ENCODE measurements at regions of chr17 and their contacts with region 1.

Region 1: GRCh38 chr17:58417300-58418092 is at the start of gene RNF43:
- DNase-seq: peak; percentile 96
- ATAC-seq: peak; percentile 100
- H3K4me3 ChIP-seq: peak within 1 kb of the TSS in 1 of 5 experiments; percentile 20
- H3K4me3 Mint-ChIP-seq: peak within 1 kb of the TSS; percentile 8
- H3K27ac ChIP-seq: peak within 1 kb of the TSS; percentile 61 to 65
- H3K27ac Mint-ChIP-seq: peak within 1 kb of the TSS; percentile 51
- H3K4me1 ChIP-seq: peaks cover 14 to 16% of the 10 kb centered on the region in 2 donors
- H3K4me1 Mint-ChIP-seq: peaks cover 21% of the 10 kb centered on the region
- H3K27me3 ChIP-seq: no peaks in the 10 kb centered on the region
- H3K27me3 Mint-ChIP-seq: no peaks in the 10 kb centered on the region
- CTCF ChIP-seq: peak; percentile 77
- total RNA-seq, gene RNF43: 2.5 and 3.2 TPM in 2 replicates

Region 2: GRCh38 chr17:58329035-58329809 is 88.3 kb before region 1 on chr17:
- CTCF ChIA-PET with region 1: interaction called, 15 read pairs
- POLR2A ChIA-PET with region 1: interaction called, 15 read pairs
- intact Hi-C with region 1: loop called (anchors 1 kb)
- DNase-seq: peak; percentile 88
- ATAC-seq: peak; percentile 37
- H3K4me3 ChIP-seq: peak overlapping the region; percentile 81 to 100 (median 99)
- H3K4me3 Mint-ChIP-seq: peak overlapping the region; percentile 91
- H3K27ac ChIP-seq: peak overlapping the region; percentile 73 to 85
- H3K27ac Mint-ChIP-seq: peak overlapping the region; percentile 93
- H3K4me1 ChIP-seq: peaks cover 36 to 69% of the 10 kb centered on the region in 2 donors
- H3K4me1 Mint-ChIP-seq: peaks cover 61% of the 10 kb centered on the region
- H3K27me3 ChIP-seq: no peaks in the 10 kb centered on the region
- H3K27me3 Mint-ChIP-seq: no peaks in the 10 kb centered on the region
- CTCF ChIP-seq: peak; percentile 79

Region 3: GRCh38 chr17:58337600-58338453 is 79.7 kb before region 1 on chr17:
- CTCF ChIA-PET with region 1: interaction called, 9 read pairs
- POLR2A ChIA-PET with region 1: interaction called, 18 read pairs
- intact Hi-C with region 1: no loop called
- DNase-seq: peak; percentile 95
- ATAC-seq: peak; percentile 67
- H3K4me3 ChIP-seq: peak overlapping the region; percentile 75 to 100 (median 99)
- H3K4me3 Mint-ChIP-seq: peak overlapping the region; percentile 91
- H3K27ac ChIP-seq: peak overlapping the region; percentile 99 to 100
- H3K27ac Mint-ChIP-seq: peak overlapping the region; percentile 98
- H3K4me1 ChIP-seq: peaks cover 85 to 100% of the 10 kb centered on the region in 2 donors
- H3K4me1 Mint-ChIP-seq: peaks cover 88% of the 10 kb centered on the region
- H3K27me3 ChIP-seq: no peaks in the 10 kb centered on the region
- H3K27me3 Mint-ChIP-seq: no peaks in the 10 kb centered on the region
- CTCF ChIP-seq: peak; percentile 31

Region 4: DNA sequence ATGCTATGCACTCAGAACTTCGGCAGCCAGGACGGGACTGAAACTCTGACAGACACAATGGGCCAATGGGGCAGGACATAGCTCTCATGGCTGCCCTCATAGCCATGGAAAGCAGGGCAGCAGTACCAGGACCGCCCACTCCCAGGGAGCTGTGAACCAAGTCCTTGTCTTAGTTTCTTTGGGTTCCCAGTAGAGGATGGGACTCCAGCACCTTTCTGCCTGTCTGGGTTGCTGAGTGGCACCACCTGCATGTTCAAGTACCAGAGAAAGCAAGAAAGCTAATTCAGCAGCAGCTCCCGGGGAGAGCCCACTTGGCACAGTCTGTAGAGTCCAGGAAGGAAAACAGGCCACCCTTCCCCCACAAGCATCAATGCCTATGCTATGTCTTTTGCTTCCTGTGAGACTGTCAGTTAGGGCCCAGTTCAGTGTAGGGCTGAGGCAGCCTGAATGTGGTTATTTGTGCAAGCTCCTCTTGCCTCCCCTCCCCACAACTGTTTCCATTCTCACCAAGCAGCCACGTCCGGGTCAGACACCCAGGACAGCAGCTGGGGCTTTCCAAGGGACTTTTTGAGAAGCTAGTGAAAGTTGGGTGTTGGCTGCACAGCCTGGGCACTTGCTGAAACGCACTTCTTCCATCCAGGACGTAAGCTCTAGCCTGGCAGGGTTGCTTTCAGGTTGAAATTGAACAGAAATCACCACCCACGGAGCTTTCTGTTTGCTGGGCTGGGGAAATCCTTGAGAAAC is 73.3 kb before region 1 on chr17:
- CTCF ChIA-PET with region 1: interaction called, 33 read pairs
- POLR2A ChIA-PET with region 1: interaction called, 18 read pairs
- intact Hi-C with region 1: loop called (anchors 2 kb)
- DNase-seq: peak; percentile 95
- ATAC-seq: peak; percentile 85
- H3K4me3 ChIP-seq: peak overlapping the region; percentile 56 to 82 (median 62)
- H3K4me3 Mint-ChIP-seq: peak overlapping the region; percentile 88
- H3K27ac ChIP-seq: peak overlapping the region; percentile 98 to 99
- H3K27ac Mint-ChIP-seq: peak overlapping the region; percentile 94
- H3K4me1 ChIP-seq: peaks cover 72 to 73% of the 10 kb centered on the region in 2 donors
- H3K4me1 Mint-ChIP-seq: peaks cover 82% of the 10 kb centered on the region
- H3K27me3 ChIP-seq: no peaks in the 10 kb centered on the region
- H3K27me3 Mint-ChIP-seq: no peaks in the 10 kb centered on the region
- CTCF ChIP-seq: no peak

Region 5: GRCh38 chr17:58352014-58352842 is 65.3 kb before region 1 on chr17 and contains the start of gene SUPT4H1:
- CTCF ChIA-PET with region 1: interaction called, 21 read pairs
- POLR2A ChIA-PET with region 1: interaction called, 21 read pairs
- intact Hi-C with region 1: loop called (anchors 1 kb)
- DNase-seq: peak; percentile 98
- ATAC-seq: peak; percentile 94
- H3K4me3 ChIP-seq: peak within 1 kb of the TSS; percentile 82 to 99 (median 91)
- H3K4me3 Mint-ChIP-seq: peak within 1 kb of the TSS; percentile 100
- H3K27ac ChIP-seq: peak within 1 kb of the TSS; percentile 91 to 95
- H3K27ac Mint-ChIP-seq: peak within 1 kb of the TSS; percentile 99
- H3K4me1 ChIP-seq: peaks cover 21 to 28% of the 10 kb centered on the region in 2 donors
- H3K4me1 Mint-ChIP-seq: peaks cover 47% of the 10 kb centered on the region
- H3K27me3 ChIP-seq: no peaks in the 10 kb centered on the region
- H3K27me3 Mint-ChIP-seq: no peaks in the 10 kb centered on the region
- CTCF ChIP-seq: no peak
- total RNA-seq, gene SUPT4H1: 49.3 and 60.1 TPM in 2 replicates

Region 6: DNA sequence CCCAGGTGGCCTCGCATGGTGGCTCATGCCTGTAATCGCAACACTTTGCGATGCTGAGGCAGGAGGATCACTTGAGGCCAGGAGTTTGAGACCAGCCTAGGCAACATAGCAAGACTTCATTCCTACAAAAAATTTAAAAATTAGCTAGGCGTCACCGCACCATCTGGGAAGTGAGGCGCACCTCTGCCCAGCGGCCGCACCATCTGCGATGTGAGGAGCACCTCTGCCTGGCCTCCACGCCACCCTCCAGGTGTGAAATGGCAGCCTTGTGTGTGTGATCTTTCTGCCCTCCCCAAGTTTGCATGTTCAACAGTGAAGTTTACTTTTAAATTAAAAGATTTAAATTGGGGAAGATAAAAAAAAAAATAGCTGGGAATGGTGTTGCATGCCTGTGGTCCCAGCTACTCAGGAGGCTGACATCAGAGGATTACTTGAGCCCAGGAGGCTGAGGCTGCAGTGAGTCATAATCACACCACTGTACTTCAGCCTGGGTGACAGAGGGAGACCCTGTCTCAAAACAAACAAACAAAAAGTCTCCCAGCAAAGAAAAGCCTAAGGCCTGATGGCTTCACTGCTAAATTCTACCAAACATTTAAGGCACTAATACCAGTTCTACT is 35.1 kb after region 1 on chr17:
- CTCF ChIA-PET with region 1: no interaction called
- POLR2A ChIA-PET with region 1: no interaction called
- intact Hi-C with region 1: no loop called
- DNase-seq: no peak
- ATAC-seq: no peak
- H3K4me3 ChIP-seq: no peak overlapping the region
- H3K4me3 Mint-ChIP-seq: no peak overlapping the region
- H3K27ac ChIP-seq: no peak overlapping the region
- H3K27ac Mint-ChIP-seq: no peak overlapping the region
- H3K4me1 ChIP-seq: no peaks in the 10 kb centered on the region
- H3K4me1 Mint-ChIP-seq: no peaks in the 10 kb centered on the region
- H3K27me3 ChIP-seq: no peaks in the 10 kb centered on the region
- H3K27me3 Mint-ChIP-seq: no peaks in the 10 kb centered on the region
- CTCF ChIP-seq: no peak

Measured in B cell (primary cell).